ENCODE measurements at regions of chr22 and their contacts with region 1.

Region 1: GRCh38 chr22:27150544-27150941 is 493.2 kb downstream of the MIAT start:
- DNase-seq: peak; percentile 94 to 99 (median 94)
- H3K4me3 ChIP-seq: peak overlapping the region in 2 of 3 experiments; percentile 19 to 47
- H3K4me3 Mint-ChIP-seq: peak overlapping the region; percentile 10 to 84
- H3K27ac ChIP-seq: peak overlapping the region; percentile 51 to 91
- H3K27ac Mint-ChIP-seq: peak overlapping the region; percentile 88 to 93 (median 91)
- H3K4me1 ChIP-seq: peaks cover 24 to 30% of the 10 kb centered on the region in 2 donors
- H3K4me1 Mint-ChIP-seq: peaks cover 35% of the 10 kb centered on the region
- H3K27me3 ChIP-seq: no peaks in the 10 kb centered on the region
- H3K27me3 Mint-ChIP-seq: peaks cover 0 to 8% (median 1%) of the 10 kb centered on the region in 3 donors
- CTCF ChIP-seq: no peak

Region 2: DNA sequence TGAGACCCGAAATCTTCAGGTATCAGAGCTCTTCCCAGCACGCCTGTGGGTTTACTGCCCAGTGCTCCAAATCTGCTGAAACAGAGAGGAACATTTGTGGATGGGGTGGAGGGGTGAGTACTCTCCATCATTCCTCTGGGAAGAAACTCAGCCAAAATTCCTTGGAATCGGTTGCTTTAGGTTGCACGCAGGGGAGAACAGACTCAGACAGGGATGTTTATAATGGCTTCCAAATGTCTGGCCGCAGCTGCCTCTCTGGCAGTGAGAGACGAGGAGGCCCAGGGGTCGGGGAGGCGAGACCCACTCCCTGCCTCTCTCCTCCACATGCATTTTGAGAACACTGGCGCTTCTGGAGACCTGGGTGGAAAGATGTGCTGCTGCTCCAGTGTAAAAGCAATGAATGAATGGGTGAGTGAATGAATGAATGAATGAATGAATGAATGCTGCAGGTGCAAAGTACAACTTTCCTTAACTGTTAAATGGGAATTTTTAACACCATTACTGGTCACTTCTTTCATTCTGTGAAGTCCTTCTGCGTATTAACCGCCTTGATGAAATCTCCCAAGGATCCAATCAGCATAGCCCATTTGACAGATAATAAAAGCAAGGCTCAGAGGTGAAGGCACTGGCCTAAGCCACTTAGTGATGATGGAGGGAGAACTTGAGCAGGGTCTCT is 55.8 kb before region 1 on chr22:
- intact Hi-C with region 1: loop called in 1 of 2 experiments (anchors 5 kb)
- DNase-seq: no peak
- H3K4me3 ChIP-seq: no peak overlapping the region
- H3K4me3 Mint-ChIP-seq: no peak overlapping the region
- H3K27ac ChIP-seq: no peak overlapping the region
- H3K27ac Mint-ChIP-seq: no peak overlapping the region
- H3K4me1 ChIP-seq: no peaks in the 10 kb centered on the region
- H3K4me1 Mint-ChIP-seq: no peaks in the 10 kb centered on the region
- H3K27me3 ChIP-seq: peaks cover 0 to 4% of the 10 kb centered on the region in 2 donors
- H3K27me3 Mint-ChIP-seq: peaks cover 5 to 17% (median 6%) of the 10 kb centered on the region in 3 donors
- CTCF ChIP-seq: no peak

Region 3: DNA sequence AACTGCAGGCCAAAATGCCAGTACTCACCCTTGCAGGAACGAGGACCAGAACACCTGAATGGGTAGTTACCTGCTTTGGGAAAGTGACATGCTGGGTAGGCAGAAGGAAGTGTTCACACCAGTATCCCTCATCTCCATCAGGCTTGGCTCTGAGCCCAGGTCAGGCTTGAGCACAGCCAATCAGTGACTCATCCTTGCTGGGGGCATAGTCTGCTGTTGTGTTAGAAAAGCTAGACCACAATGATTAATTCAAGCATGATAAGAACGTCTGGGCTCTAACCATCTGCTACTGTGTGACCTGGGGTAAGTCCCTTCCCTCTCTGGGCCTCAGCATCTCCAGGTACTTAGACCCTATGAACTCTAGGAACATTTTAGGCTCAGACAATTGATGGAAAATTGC is 42.7 kb before region 1 on chr22:
- intact Hi-C with region 1: loop called (anchors 5 kb)
- DNase-seq: peak; percentile 80 to 96 (median 93)
- H3K4me3 ChIP-seq: no peak overlapping the region
- H3K4me3 Mint-ChIP-seq: no peak overlapping the region
- H3K27ac ChIP-seq: peak overlapping the region in 1 of 2 donors; percentile 1
- H3K27ac Mint-ChIP-seq: peak overlapping the region in 4 of 7 donors; percentile 46 to 73 (median 58)
- H3K4me1 ChIP-seq: peaks cover 8 to 10% of the 10 kb centered on the region in 2 donors
- H3K4me1 Mint-ChIP-seq: peaks cover 20% of the 10 kb centered on the region
- H3K27me3 ChIP-seq: peaks cover 4 to 8% of the 10 kb centered on the region in 2 donors
- H3K27me3 Mint-ChIP-seq: peaks cover 12 to 18% (median 13%) of the 10 kb centered on the region in 3 donors
- CTCF ChIP-seq: no peak

Region 4: GRCh38 chr22:27134315-27134701 is 16.2 kb before region 1 on chr22:
- intact Hi-C with region 1: loop called in 1 of 2 experiments (anchors 2 kb)
- DNase-seq: peak; percentile 95 to 99 (median 97)
- H3K4me3 ChIP-seq: no peak overlapping the region
- H3K4me3 Mint-ChIP-seq: peak overlapping the region; percentile 27 to 39
- H3K27ac ChIP-seq: peak overlapping the region; percentile 85 to 99
- H3K27ac Mint-ChIP-seq: peak overlapping the region; percentile 95 to 100 (median 99)
- H3K4me1 ChIP-seq: peaks cover 65 to 68% of the 10 kb centered on the region in 2 donors
- H3K4me1 Mint-ChIP-seq: peaks cover 66% of the 10 kb centered on the region
- H3K27me3 ChIP-seq: no peaks in the 10 kb centered on the region
- H3K27me3 Mint-ChIP-seq: peaks cover 0 to 4% (median 1%) of the 10 kb centered on the region in 3 donors
- CTCF ChIP-seq: no peak